Activated naive CD4-positive, alpha-beta T cell treated with anti-CD3 and anti-CD28 coated beads for 36 hours (primary cell): ENCODE measurements at regions of chr1 and their contacts with region 1.

Region 1: GRCh38 chr1:224182866-224183590 is at the start of gene DEGS1:
- DNase-seq: peak; percentile 80
- H3K4me3 Mint-ChIP-seq: peak within 1 kb of the TSS; percentile 86
- H3K27ac Mint-ChIP-seq: peak within 1 kb of the TSS; percentile 87
- H3K4me1 Mint-ChIP-seq: peaks cover 40% of the 10 kb centered on the region
- H3K27me3 Mint-ChIP-seq: no peaks in the 10 kb centered on the region
- total RNA-seq, gene DEGS1: 9.2 to 10.1 TPM

Region 2: GRCh38 chr1:223401873-223402789 is 780.9 kb before region 1 on chr1:
- CTCF ChIA-PET with region 1: no interaction called
- intact Hi-C with region 1: no loop called
- DNase-seq: peak; percentile 26
- H3K4me3 Mint-ChIP-seq: no peak overlapping the region
- H3K27ac Mint-ChIP-seq: no peak overlapping the region
- H3K4me1 Mint-ChIP-seq: peaks cover 26% of the 10 kb centered on the region
- H3K27me3 Mint-ChIP-seq: no peaks in the 10 kb centered on the region

Region 3: DNA sequence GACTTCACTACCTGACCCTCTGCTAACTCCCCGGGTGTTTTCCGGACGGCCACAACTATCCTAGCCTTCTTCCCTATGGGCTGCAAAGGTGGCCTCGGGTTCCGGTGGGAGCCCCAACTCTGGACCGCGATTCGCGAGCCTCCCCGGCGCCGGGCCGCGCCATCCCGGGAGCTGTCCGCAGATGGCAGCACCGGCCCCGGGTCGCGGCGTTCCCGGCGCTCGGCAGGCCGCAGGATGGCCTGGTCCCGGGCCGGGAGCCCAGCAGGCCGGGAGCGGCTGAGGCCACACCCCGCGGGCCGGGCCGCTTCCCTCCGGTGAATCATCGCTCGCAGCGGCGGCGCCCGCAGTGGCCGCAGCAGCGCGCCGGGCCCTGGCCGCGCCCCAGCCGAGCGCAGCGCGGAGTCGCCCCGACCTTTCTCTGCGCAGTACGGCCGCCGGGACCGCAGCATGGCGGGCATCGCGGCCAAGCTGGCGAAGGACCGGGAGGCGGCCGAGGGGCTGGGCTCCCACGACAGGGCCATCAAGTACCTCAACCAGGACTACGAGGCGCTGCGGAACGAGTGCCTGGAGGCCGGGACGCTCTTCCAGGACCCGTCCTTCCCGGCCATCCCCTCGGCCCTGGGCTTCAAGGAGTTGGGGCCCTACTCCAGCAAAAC is 470.7 kb before region 1 on chr1 and contains the start of gene CAPN2:
- CTCF ChIA-PET with region 1: no interaction called
- intact Hi-C with region 1: loop called (anchors 5 kb)
- DNase-seq: peak; percentile 65
- H3K4me3 Mint-ChIP-seq: peak within 1 kb of the TSS; percentile 75
- H3K27ac Mint-ChIP-seq: peak within 1 kb of the TSS; percentile 41
- H3K4me1 Mint-ChIP-seq: peaks cover 52% of the 10 kb centered on the region
- H3K27me3 Mint-ChIP-seq: no peaks in the 10 kb centered on the region
- total RNA-seq, gene CAPN2: 17.0 to 19.5 TPM

Region 4: DNA sequence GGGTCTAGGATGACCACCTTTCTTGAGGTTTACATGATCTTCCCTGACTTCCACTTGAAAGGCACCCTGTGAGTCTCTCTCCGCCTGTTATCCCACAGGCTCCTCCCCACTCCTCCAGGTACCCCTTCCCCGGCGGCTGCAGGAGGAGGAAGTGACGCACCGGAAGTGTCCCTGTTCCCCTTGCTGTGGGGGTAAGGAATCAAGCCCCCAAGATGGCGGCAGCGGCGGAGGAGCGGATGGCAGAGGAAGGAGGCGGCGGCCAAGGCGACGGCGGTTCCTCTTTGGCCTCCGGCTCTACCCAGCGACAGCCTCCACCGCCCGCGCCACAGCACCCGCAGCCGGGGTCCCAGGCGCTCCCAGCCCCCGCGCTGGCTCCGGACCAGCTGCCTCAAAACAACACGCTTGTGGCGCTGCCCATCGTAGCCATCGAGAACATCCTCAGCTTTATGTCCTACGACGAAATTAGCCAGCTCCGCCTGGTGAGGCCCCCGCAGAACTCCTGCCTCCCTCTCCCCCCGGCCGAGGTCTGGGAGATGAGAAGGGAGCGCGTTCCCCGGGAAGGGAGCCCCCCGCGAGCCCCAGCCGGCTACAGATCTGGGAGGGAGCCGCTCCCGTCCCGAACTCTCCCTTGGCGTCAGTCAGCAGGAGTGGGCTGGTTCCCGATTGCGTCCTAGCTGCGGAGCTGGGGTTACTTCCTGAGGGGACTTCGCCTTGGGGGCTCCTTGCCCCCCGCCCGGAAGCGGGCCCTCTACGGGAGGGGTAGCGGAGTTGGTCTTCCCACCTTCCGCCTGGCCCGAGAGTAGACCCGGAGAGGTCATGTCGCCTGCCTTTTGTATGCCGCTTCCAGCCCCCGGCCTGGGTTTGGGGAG is 68.9 kb before region 1 on chr1 and contains the start of gene FBXO28:
- CTCF ChIA-PET with region 1: no interaction called
- intact Hi-C with region 1: loop called (anchors 1 kb)
- DNase-seq: peak; percentile 99
- H3K4me3 Mint-ChIP-seq: peak within 1 kb of the TSS; percentile 75
- H3K27ac Mint-ChIP-seq: peak within 1 kb of the TSS; percentile 83
- H3K4me1 Mint-ChIP-seq: peaks cover 26% of the 10 kb centered on the region
- H3K27me3 Mint-ChIP-seq: no peaks in the 10 kb centered on the region
- total RNA-seq, gene FBXO28: 9.6 to 9.7 TPM

Region 5: DNA sequence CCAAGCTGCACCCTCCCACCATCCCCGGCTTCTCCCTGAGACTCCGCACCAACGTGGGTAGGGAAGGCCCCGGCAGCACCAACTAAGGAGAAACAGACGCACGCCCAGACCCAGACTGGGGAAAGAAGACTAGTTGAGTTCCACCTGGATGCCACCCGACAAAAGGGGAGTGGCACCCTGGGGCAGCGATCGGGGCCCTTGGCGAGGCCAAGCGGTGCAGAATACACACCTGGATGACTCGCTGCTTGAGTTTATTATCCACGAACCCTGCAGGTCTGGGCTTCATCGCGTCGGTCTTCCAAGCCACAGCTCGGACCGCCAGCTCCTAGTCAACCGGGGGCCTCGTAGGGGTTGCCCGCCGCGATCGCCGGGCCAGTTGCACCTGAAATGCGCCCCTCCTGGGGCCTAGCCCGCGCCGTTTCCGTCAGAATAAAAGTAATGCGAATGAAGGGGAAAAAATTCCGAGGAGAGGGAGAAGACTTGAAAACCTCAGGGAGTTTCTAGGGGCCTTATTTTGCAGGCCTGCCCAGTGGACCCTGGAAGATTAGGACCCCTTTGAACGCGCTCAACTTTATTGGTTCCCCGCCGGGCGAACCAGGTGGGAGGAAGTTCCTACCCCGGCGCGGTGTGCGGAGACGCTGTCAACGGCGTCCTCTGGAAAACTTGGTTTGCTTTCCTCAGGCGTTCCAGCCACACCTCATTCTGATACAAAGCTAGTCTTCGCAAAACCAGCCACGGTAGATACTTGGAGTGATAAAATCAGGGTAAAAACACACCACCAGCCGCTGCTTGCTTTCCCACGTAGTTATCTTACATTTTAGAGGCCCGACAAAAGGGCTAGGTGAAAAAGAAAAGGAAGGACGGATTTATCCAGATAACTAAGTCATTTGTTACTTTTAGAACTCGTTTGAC is 147.1 kb after region 1 on chr1 and contains the start of gene NVL:
- CTCF ChIA-PET with region 1: no interaction called
- intact Hi-C with region 1: loop called (anchors 1 kb)
- DNase-seq: peak; percentile 89
- H3K4me3 Mint-ChIP-seq: peak within 1 kb of the TSS; percentile 98
- H3K27ac Mint-ChIP-seq: peak within 1 kb of the TSS; percentile 98
- H3K4me1 Mint-ChIP-seq: peaks cover 38% of the 10 kb centered on the region
- H3K27me3 Mint-ChIP-seq: no peaks in the 10 kb centered on the region
- total RNA-seq, gene NVL: 26.7 to 29.9 TPM

Region 6: GRCh38 chr1:224458996-224459395 is 276.0 kb after region 1 on chr1:
- CTCF ChIA-PET with region 1: no interaction called
- intact Hi-C with region 1: loop called (anchors 2 kb)
- DNase-seq: no peak
- H3K4me3 Mint-ChIP-seq: no peak overlapping the region
- H3K27ac Mint-ChIP-seq: peak overlapping the region; percentile 41
- H3K4me1 Mint-ChIP-seq: peaks cover 13% of the 10 kb centered on the region
- H3K27me3 Mint-ChIP-seq: no peaks in the 10 kb centered on the region

Region 7: GRCh38 chr1:224592636-224593582 is 409.9 kb after region 1 on chr1:
- CTCF ChIA-PET with region 1: no interaction called
- intact Hi-C with region 1: no loop called
- DNase-seq: no peak
- H3K4me3 Mint-ChIP-seq: no peak overlapping the region
- H3K27ac Mint-ChIP-seq: no peak overlapping the region
- H3K4me1 Mint-ChIP-seq: no peaks in the 10 kb centered on the region
- H3K27me3 Mint-ChIP-seq: no peaks in the 10 kb centered on the region

Region 8: GRCh38 chr1:225428068-225428880 is 1245.2 kb after region 1 on chr1:
- CTCF ChIA-PET with region 1: no interaction called
- intact Hi-C with region 1: loop called (anchors 5 kb)
- DNase-seq: peak; percentile 94
- H3K4me3 Mint-ChIP-seq: peak overlapping the region; percentile 85
- H3K27ac Mint-ChIP-seq: peak overlapping the region; percentile 96
- H3K4me1 Mint-ChIP-seq: peaks cover 43% of the 10 kb centered on the region
- H3K27me3 Mint-ChIP-seq: no peaks in the 10 kb centered on the region